Activated CD8-positive, alpha-beta T cell treated with anti-CD3 and anti-CD28 coated beads, Interleukin-2, amount 10 ng/mL, durations not matched to agents 7 days and 5 days (primary cell): ENCODE measurements at regions of chr1 and their contacts with region 1.

Region 1: GRCh38 chr1:152047730-152048402 is 11.1 kb upstream of the S100A11 start:
- DNase-seq: peak; percentile 94
- ATAC-seq: peak; percentile 93
- H3K4me3 Mint-ChIP-seq: peak overlapping the region; percentile 73
- H3K27ac Mint-ChIP-seq: peak overlapping the region; percentile 96
- H3K4me1 Mint-ChIP-seq: peaks cover 39% of the 10 kb centered on the region
- H3K27me3 Mint-ChIP-seq: peaks cover 6% of the 10 kb centered on the region

Region 2: DNA sequence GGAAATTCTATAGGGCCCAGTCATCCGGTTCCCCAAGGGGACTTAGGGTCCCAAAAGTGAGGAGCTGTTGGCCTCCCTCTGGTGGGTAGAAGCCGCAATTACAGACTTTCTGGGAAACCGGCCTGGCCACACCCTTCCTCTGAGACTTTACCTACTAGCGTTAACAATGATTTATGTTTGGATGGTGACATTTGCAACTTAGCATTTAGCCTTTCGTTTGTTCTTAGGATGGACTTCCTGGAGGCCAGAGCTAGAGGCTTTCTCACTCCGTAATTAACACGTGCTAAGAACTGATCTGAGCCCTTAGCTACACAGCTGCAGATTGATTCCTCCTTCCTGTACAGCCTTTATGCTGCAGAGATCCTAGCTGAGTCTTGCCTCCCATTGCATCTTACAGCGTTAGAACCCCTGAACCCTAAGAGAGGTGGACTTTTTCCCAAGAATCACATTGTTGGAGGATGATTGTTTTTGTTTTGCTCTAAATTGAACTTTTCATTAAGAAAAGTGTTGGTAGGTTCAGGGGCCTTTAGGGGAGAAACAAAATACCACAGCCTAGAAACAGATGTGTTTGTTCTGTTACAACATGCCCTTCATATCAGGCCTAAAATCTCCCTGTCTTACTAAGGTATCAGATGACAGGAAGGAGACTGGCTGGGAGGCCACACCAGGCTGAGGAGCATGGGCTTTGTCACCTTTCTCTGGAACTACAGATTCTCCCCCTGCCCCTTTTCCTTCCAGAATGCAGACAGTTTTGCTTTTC is 13.0 kb before region 1 on chr1:
- CTCF ChIA-PET with region 1: interaction called, 113 read pairs
- POLR2A ChIA-PET with region 1: interaction called, 75 read pairs
- DNase-seq: peak; percentile 83
- ATAC-seq: peak; percentile 81
- H3K4me3 Mint-ChIP-seq: peak overlapping the region; percentile 98
- H3K27ac Mint-ChIP-seq: peak overlapping the region; percentile 98
- H3K4me1 Mint-ChIP-seq: peaks cover 43% of the 10 kb centered on the region
- H3K27me3 Mint-ChIP-seq: no peaks in the 10 kb centered on the region

Region 3: GRCh38 chr1:152110860-152111514 is 63.1 kb after region 1 on chr1:
- CTCF ChIA-PET with region 1: interaction called, 11 read pairs
- POLR2A ChIA-PET with region 1: no interaction called
- DNase-seq: peak; percentile 44
- ATAC-seq: peak; percentile 70
- H3K4me3 Mint-ChIP-seq: no peak overlapping the region
- H3K27ac Mint-ChIP-seq: no peak overlapping the region
- H3K4me1 Mint-ChIP-seq: peaks cover 5% of the 10 kb centered on the region
- H3K27me3 Mint-ChIP-seq: peaks cover 20% of the 10 kb centered on the region

Region 4: GRCh38 chr1:152175544-152175943 is 127.7 kb after region 1 on chr1:
- CTCF ChIA-PET with region 1: interaction called, 322 read pairs
- POLR2A ChIA-PET with region 1: no interaction called
- DNase-seq: no peak
- ATAC-seq: no peak
- H3K4me3 Mint-ChIP-seq: no peak overlapping the region
- H3K27ac Mint-ChIP-seq: no peak overlapping the region
- H3K4me1 Mint-ChIP-seq: no peaks in the 10 kb centered on the region
- H3K27me3 Mint-ChIP-seq: peaks cover 5% of the 10 kb centered on the region

Region 5: DNA sequence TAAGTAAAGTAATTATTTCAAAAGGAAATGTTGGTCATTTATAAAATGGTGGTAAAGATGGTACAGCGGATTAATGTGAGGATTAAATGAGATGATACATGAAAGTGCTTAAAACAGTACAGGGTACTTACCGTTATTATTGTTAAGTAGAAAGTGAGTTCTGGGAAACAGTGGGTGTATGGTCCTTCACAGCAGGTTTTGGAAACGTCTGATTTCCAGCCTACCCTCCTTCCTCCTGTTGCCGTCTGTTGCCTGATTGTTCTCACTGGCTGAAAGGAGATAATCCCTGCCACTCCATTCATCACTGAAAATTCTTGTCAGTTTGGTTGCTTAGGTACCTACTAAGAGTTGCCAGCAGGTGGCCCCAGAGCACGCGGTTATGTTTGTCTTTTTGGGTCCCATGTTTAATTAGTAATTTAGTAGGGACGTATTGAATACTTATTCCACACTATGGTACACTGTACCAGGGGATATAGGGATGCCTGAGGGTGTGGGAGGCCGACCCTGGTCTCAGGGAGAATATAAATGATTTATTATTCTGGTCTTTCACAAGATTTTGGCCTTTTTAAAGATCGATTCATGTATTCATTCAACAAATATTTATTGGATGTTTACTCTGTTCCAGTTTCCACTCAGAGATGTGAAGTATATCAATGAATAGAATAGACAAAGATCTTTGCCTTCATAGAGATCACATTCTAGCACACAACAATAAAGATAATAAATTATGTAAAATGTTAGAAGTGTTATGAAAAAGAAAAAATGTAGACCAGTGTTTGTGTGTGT is 142.0 kb after region 1 on chr1:
- CTCF ChIA-PET with region 1: interaction called, 322 read pairs
- POLR2A ChIA-PET with region 1: interaction called, 3 read pairs
- DNase-seq: peak; percentile 77
- ATAC-seq: peak; percentile 57
- H3K4me3 Mint-ChIP-seq: peak overlapping the region; percentile 66
- H3K27ac Mint-ChIP-seq: no peak overlapping the region
- H3K4me1 Mint-ChIP-seq: peaks cover 6% of the 10 kb centered on the region
- H3K27me3 Mint-ChIP-seq: peaks cover 12% of the 10 kb centered on the region